ENCODE measurements at regions of chr6 and their contacts with region 1.

Region 1: GRCh38 chr6:104843200-104843599 is 16.5 kb downstream of the HACE1 start:
- DNase-seq: no peak
- CTCF ChIP-seq: no peak

Region 2: GRCh38 chr6:104855507-104855906 is 12.3 kb after region 1 on chr6:
- CTCF ChIA-PET with region 1: interaction called, 10 read pairs
- POLR2A ChIA-PET with region 1: no interaction called
- DNase-seq: no peak
- CTCF ChIP-seq: no peak